Activated T-helper 1 cell treated with anti-CD3 and anti-CD28 coated beads, Interleukin-12 subunit alpha, Interleukin-12 subunit beta, Interleukin-2, Interleukin-4 antibody, amounts not matched to agents 30 ng/mL and 10 ng/mL and 1 ng/mL, durations not matched to agents 14 hours and 24 hours and 36 hours (primary cell): ENCODE measurements at regions of chr17 and their contacts with region 1.

Region 1: GRCh38 chr17:8189711-8190477 is at the start of gene BORCS6:
- DNase-seq: peak; percentile 94
- H3K4me3 Mint-ChIP-seq: no peak within 1 kb of the TSS
- H3K27ac Mint-ChIP-seq: peak within 1 kb of the TSS; percentile 84
- H3K4me1 Mint-ChIP-seq: peaks cover 11% of the 10 kb centered on the region
- H3K27me3 Mint-ChIP-seq: no peaks in the 10 kb centered on the region
- total RNA-seq, gene BORCS6: 6.3 and 6.7 TPM in 2 replicates

Region 2: GRCh38 chr17:7844292-7845154 is 345.4 kb before region 1 on chr17:
- intact Hi-C with region 1: loop called (anchors 1 kb)
- DNase-seq: peak; percentile 87
- H3K4me3 Mint-ChIP-seq: peak overlapping the region; percentile 89
- H3K27ac Mint-ChIP-seq: peak overlapping the region; percentile 96
- H3K4me1 Mint-ChIP-seq: peaks cover 37% of the 10 kb centered on the region
- H3K27me3 Mint-ChIP-seq: no peaks in the 10 kb centered on the region

Region 3: GRCh38 chr17:8138672-8139371 is 51.1 kb before region 1 on chr17:
- intact Hi-C with region 1: loop called (anchors 1 kb)
- DNase-seq: peak; percentile 95
- H3K4me3 Mint-ChIP-seq: no peak overlapping the region
- H3K27ac Mint-ChIP-seq: no peak overlapping the region
- H3K4me1 Mint-ChIP-seq: no peaks in the 10 kb centered on the region
- H3K27me3 Mint-ChIP-seq: peaks cover 11% of the 10 kb centered on the region

Region 4: GRCh38 chr17:8150194-8151122 is 39.4 kb before region 1 on chr17:
- intact Hi-C with region 1: no loop called
- DNase-seq: no peak
- H3K4me3 Mint-ChIP-seq: peak overlapping the region; percentile 95
- H3K27ac Mint-ChIP-seq: peak overlapping the region; percentile 98
- H3K4me1 Mint-ChIP-seq: peaks cover 37% of the 10 kb centered on the region
- H3K27me3 Mint-ChIP-seq: no peaks in the 10 kb centered on the region

Region 5: DNA sequence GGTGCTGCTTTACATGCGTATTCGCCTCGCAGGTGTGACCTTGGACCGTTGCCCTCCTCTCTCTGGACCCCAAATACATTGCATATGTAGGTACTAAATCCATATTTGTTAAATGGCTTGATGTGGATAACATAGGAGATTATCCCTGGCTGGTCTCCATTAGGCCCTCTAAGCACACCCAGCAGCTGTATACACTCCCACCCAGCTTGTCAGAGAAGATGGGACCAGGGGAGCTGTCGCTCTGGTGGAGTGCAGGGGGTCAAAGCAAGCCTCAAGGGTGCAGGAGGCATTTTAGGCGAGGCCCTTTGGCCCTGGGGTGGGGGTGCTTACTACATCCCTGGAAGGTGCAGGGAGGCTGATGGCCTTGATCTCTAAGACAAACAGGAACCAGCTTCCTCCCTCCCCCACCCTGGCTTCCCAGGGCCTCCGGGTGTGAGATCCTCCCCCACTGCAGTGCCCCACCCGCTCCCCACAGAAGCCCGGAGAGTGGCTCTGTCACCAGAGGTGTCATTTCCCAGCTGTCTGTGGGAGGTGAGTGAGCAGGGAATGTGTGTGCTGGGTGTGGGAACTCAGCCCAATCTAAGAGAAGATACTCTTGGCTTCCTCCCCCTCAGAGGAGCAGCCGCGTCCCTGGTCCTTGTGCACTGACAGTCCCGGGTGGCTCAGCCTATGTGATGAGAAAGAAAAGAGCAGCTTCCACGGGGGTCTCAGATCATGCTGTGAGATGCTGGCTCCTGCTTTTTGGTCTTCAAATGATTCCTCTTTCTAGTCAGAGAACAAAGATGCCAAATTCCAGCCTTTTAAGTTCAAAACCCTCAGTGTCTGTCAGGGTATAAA is 25.7 kb before region 1 on chr17:
- intact Hi-C with region 1: loop called (anchors 1 kb)
- DNase-seq: peak; percentile 74
- H3K4me3 Mint-ChIP-seq: peak overlapping the region; percentile 88
- H3K27ac Mint-ChIP-seq: peak overlapping the region; percentile 99
- H3K4me1 Mint-ChIP-seq: peaks cover 57% of the 10 kb centered on the region
- H3K27me3 Mint-ChIP-seq: peaks cover 2% of the 10 kb centered on the region

Region 6: DNA sequence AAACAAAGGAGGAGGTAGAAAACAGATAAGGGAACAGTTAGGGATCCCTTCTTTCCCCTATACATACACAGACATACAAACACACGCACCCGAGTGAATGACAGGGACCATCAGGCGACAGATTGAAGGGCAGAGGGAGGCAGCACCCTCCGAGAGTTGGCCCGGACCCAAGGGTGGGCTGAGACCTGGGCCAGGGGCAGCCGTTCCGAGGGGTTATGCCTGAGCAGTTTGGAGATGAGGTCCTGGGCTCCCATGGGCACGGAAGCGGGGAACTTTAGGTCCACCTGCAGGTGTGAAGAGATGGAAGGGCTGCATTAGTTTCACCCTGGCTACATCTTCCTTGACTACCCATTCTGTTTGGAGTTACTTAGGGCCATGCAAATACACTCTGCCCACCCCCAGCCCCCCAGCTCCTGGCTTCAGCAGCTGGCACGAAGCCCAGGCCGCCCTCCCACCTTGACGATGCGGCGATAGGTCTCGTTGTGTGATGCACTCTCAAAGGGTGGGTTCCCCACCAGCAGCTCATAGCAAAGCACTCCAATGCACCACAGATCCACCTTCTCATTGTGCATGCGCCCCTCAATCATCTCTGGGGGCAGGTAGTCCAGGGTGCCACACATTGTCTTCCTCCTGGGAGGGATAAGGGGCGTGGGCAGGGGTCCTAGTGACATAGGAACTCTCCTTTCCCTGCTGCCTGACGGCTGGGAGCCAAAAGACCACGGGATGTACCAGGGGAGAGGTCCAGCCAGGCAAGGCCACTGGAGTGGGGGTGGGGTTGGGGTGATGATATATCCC is 15.1 kb after region 1 on chr17:
- intact Hi-C with region 1: loop called (anchors 1 kb)
- DNase-seq: no peak
- H3K4me3 Mint-ChIP-seq: no peak overlapping the region
- H3K27ac Mint-ChIP-seq: no peak overlapping the region
- H3K4me1 Mint-ChIP-seq: peaks cover 26% of the 10 kb centered on the region
- H3K27me3 Mint-ChIP-seq: no peaks in the 10 kb centered on the region

Region 7: GRCh38 chr17:8248751-8249607 is 59.1 kb after region 1 on chr17 and contains the start of gene PFAS:
- intact Hi-C with region 1: loop called (anchors 1 kb)
- DNase-seq: peak; percentile 95
- H3K4me3 Mint-ChIP-seq: peak within 1 kb of the TSS; percentile 98
- H3K27ac Mint-ChIP-seq: peak within 1 kb of the TSS; percentile 100
- H3K4me1 Mint-ChIP-seq: peaks cover 40% of the 10 kb centered on the region
- H3K27me3 Mint-ChIP-seq: peaks cover 1% of the 10 kb centered on the region
- total RNA-seq, gene PFAS: 189 and 204 TPM in 2 replicates

Region 8: DNA sequence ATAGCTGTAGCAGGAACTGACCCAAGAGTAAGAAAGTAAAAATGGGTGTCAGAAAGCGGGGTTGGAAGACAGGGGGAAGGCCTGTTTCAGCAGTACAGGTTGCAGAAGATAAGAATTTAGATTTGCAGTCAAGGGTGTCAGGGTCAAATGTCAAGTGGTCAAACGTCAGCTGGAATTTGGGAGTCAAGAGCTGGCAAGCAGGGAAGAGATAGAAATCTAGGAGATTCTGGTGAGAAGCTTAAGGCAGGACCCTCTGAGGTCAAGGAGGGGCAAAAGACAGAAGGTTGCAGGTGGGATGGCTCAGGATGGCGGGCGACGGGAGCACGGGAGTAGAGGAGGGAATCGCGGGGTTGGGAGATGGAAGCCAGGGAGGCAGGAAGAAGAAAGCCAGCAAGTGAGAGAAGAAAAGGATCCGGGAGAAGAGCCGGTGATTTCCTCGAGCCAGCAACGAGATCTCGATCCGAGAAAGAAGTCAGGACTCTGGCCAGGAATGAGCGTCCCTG is 105.0 kb after region 1 on chr17:
- intact Hi-C with region 1: loop called (anchors 1 kb)
- DNase-seq: no peak
- H3K4me3 Mint-ChIP-seq: peak overlapping the region; percentile 87
- H3K27ac Mint-ChIP-seq: peak overlapping the region; percentile 83
- H3K4me1 Mint-ChIP-seq: peaks cover 42% of the 10 kb centered on the region
- H3K27me3 Mint-ChIP-seq: no peaks in the 10 kb centered on the region